ENCODE measurements at regions of chr17 and their contacts with region 1.

Region 1: GRCh38 chr17:12744298-12744697 is 45.0 kb upstream of the ARHGAP44 start:
- DNase-seq: peak in 2 of 3 donors; percentile 64 to 67
- ATAC-seq: peak; percentile 84 to 89
- H3K4me3 ChIP-seq: no peak overlapping the region
- H3K27ac ChIP-seq: peak overlapping the region; percentile 99
- H3K4me1 ChIP-seq: peaks cover 2% of the 10 kb centered on the region
- H3K27me3 ChIP-seq: no peaks in the 10 kb centered on the region

Region 2: GRCh38 chr17:12522743-12523183 is 221.5 kb before region 1 on chr17:
- intact Hi-C with region 1: no loop called
- DNase-seq: peak; percentile 25 to 42 (median 33)
- ATAC-seq: peak in 1 of 2 donors; percentile 20
- H3K4me3 ChIP-seq: no peak overlapping the region
- H3K27ac ChIP-seq: no peak overlapping the region
- H3K4me1 ChIP-seq: no peaks in the 10 kb centered on the region
- H3K27me3 ChIP-seq: no peaks in the 10 kb centered on the region

Region 3: GRCh38 chr17:12646761-12647422 is 97.4 kb before region 1 on chr17:
- intact Hi-C with region 1: no loop called
- DNase-seq: no peak
- ATAC-seq: no peak
- H3K4me3 ChIP-seq: no peak overlapping the region
- H3K27ac ChIP-seq: no peak overlapping the region
- H3K4me1 ChIP-seq: no peaks in the 10 kb centered on the region
- H3K27me3 ChIP-seq: no peaks in the 10 kb centered on the region

Region 4: DNA sequence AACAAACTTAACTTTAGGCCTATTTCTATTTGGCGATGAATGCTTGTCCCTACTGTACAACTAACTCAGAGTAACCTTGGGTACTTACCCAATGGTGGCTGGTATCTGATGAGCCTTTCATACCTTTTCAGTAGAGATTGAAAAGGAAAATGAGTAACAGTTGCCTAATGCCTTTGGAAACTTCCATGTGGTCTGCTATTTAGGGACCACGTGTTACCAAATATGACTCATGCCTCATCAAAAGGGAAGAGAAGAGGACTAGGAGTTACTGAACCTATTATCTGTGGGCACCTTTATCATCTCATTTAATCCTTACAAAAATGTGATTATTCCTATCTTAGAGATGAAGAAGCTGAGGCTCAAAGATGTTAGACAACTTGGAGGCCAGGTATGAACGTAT is 70.5 kb before region 1 on chr17:
- intact Hi-C with region 1: loop called in 2 of 4 experiments (anchors 5 kb)
- DNase-seq: no peak
- ATAC-seq: peak in 1 of 2 donors; percentile 21
- H3K4me3 ChIP-seq: no peak overlapping the region
- H3K27ac ChIP-seq: no peak overlapping the region
- H3K4me1 ChIP-seq: no peaks in the 10 kb centered on the region
- H3K27me3 ChIP-seq: no peaks in the 10 kb centered on the region

Measured in right cardiac atrium (tissue), 5 donors.